GM18951 (cell line): ENCODE measurements at regions of chr3 and their contacts with region 1.

Region 1: GRCh38 chr3:73100741-73101559 is 39.5 kb downstream of the EBLN2 start:
- POLR2A ChIP-seq: no peak

Region 2: GRCh38 chr3:72120806-72121778 is 979.9 kb before region 1 on chr3:
- in situ Hi-C with region 1: no loop called
- POLR2A ChIP-seq: no peak

Region 3: DNA sequence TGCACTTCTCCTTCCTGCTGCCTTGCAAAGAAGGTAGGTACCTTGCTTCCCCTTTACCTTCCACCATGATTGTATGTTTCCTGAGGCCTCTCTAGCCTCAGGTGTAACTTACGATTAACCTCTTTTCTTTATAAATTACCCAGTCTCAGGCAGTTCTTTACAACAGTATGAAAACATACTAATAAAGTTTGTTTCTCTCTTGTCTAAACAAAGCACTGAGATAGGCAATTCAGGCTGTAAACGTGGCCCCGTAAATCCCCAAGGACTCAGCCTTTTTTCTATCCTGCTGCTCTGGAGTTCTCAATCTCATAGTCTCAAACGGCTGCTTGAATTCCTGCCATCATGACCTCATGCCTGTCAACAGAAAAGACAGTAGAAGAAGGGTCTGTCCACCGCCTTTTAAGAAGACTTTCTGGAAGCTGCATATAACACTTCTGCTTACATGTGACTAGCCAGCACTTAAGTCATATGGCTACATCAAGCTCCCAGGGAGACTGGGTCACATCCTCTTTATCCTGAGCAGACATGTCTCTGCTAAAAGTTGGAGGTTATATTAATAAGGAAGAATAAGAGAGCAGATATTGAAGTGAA is 218.3 kb after region 1 on chr3:
- in situ Hi-C with region 1: no loop called
- POLR2A ChIP-seq: no peak

Region 4: DNA sequence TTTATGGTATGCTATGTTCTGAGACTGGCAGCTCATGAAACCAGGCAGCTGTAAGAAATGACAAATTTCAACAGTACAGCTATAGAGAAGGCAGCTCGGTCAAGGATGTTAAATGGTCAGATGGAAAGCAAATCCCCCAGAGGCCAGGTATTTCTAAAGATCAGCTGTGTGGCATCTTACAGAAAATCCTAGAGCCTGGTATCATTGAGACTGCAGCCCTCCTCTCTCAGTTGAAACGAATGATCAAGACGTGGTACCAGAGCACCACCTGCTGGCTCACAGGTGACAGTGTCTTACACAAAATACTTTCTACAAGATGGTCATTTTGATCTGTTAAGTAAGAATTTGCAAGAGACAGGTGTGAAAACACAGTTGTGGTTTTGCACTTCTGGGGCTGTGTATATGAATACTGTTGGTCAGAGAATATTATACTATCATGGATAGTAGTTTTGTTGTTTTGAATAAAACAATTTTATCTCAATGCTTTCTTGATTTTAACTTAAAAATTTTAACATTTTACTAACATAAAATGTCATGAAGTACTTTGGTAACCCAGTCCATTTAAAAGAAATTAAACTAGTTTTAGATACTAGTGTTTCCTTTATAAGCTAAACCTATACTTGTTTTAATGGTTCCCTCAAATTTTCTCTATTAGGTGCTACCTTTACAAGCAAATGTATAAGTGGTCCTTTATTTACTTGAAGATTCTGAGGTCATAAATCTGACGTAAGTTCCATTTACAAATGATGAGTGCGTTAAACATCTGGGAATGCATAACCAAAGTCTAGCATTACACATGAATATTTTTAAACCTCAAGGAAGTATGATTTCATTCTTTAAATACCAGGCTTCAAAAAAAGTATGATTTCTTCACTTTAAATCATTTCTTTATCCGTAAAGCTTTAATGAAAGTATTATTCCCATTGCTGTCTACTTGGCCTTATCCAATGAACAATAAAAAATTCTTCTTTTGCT is 401.9 kb after region 1 on chr3:
- in situ Hi-C with region 1: loop called (anchors 5 kb)
- POLR2A ChIP-seq: no peak